ENCODE measurements at regions of chr9 and their contacts with region 1.

Region 1: GRCh38 chr9:5628530-5629311 is at the start of gene RIC1:
- DNase-seq: peak; percentile 94
- ATAC-seq: peak; percentile 87
- H3K4me3 Mint-ChIP-seq: peak within 1 kb of the TSS; percentile 100
- H3K27ac Mint-ChIP-seq: peak within 1 kb of the TSS; percentile 97
- H3K4me1 Mint-ChIP-seq: peaks cover 49% of the 10 kb centered on the region
- H3K27me3 Mint-ChIP-seq: no peaks in the 10 kb centered on the region
- total RNA-seq, gene RIC1: 16.7 to 17.8 TPM

Region 2: GRCh38 chr9:5529683-5530221 is 99.0 kb before region 1 on chr9:
- CTCF ChIA-PET with region 1: no interaction called
- POLR2A ChIA-PET with region 1: no interaction called
- DNase-seq: no peak
- ATAC-seq: no peak
- H3K4me3 Mint-ChIP-seq: no peak overlapping the region
- H3K27ac Mint-ChIP-seq: no peak overlapping the region
- H3K4me1 Mint-ChIP-seq: peaks cover 9% of the 10 kb centered on the region
- H3K27me3 Mint-ChIP-seq: no peaks in the 10 kb centered on the region

Region 3: GRCh38 chr9:5566054-5566618 is 62.6 kb before region 1 on chr9:
- CTCF ChIA-PET with region 1: no interaction called
- POLR2A ChIA-PET with region 1: no interaction called
- DNase-seq: no peak
- ATAC-seq: no peak
- H3K4me3 Mint-ChIP-seq: no peak overlapping the region
- H3K27ac Mint-ChIP-seq: no peak overlapping the region
- H3K4me1 Mint-ChIP-seq: peaks cover 19% of the 10 kb centered on the region
- H3K27me3 Mint-ChIP-seq: no peaks in the 10 kb centered on the region

Region 4: GRCh38 chr9:5608298-5609225 is 20.2 kb before region 1 on chr9:
- CTCF ChIA-PET with region 1: interaction called, 5 read pairs
- POLR2A ChIA-PET with region 1: interaction called, 19 read pairs
- DNase-seq: no peak
- ATAC-seq: peak; percentile 80
- H3K4me3 Mint-ChIP-seq: peak overlapping the region; percentile 71
- H3K27ac Mint-ChIP-seq: peak overlapping the region; percentile 84
- H3K4me1 Mint-ChIP-seq: peaks cover 20% of the 10 kb centered on the region
- H3K27me3 Mint-ChIP-seq: no peaks in the 10 kb centered on the region

Measured in activated CD8-positive, alpha-beta T cell treated with anti-CD3 and anti-CD28 coated beads, Interleukin-2, amount 10 ng/mL, durations not matched to agents 7 days and 5 days (primary cell).